ENCODE measurements at regions of chr16 and their contacts with region 1.

Region 1: GRCh38 chr16:57300387-57301125 is 16.1 kb upstream of the PLLP start:
- DNase-seq: peak; percentile 97
- H3K4me3 ChIP-seq: peak overlapping the region; percentile 25 to 47 (median 40)
- H3K27ac ChIP-seq: no peak overlapping the region
- H3K4me1 ChIP-seq: peaks cover 10% of the 10 kb centered on the region
- H3K27me3 ChIP-seq: no peaks in the 10 kb centered on the region
- CTCF ChIP-seq: peak; percentile 97 to 99

Region 2: DNA sequence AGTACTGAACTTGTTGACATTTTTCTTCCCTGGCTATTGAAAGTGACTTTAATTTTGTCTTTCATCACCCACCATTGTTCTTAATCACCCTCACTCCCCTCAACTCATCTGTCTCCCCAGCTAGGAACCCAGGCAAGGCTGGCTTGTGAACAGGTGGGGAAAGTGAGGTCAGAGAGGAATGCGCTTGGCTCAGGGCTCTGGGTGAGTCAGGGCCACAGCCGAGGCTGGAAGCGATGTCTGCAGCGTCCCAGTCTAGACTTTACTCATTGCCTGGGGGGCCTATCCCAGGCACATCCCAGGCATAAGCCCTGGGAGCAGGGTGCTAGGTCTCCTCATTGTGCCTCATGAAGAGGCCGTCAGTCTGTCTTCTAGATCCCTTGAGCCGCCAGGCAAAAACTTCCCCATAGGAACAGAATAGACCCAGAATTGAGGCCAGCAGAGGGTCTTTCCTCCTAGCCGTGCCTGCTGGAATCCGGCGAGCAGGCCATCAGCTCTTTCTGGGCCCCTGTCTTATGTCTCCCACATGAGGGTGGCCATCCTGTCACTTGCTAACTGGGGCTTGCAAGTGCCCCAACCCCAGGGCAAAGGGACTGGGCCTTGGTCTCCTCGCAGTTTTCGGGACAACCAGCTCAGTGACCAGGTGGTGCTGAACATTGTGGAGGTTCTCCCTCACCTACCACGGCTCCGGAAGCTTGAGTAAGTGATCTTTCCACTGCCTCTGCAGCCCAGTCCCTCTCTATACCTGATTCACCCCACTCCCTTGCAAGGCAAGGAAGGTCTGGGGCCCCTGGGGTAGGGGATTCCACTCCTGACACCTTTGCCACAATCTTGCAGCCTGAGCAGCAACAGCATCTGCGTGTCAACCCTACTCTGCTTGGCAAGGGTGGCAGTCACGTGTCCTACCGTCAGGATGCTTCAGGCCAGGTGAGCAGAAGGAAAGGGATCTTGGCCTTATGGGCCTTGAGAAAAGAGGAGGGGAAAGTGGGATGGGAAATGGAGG is 271.1 kb before region 1 on chr16:
- CTCF ChIA-PET with region 1: no interaction called
- dilution Hi-C with region 1: no loop called
- in situ Hi-C with region 1: no loop called
- intact Hi-C with region 1: no loop called
- DNase-seq: peak; percentile 60
- H3K4me3 ChIP-seq: no peak overlapping the region
- H3K27ac ChIP-seq: no peak overlapping the region
- H3K4me1 ChIP-seq: peaks cover 18% of the 10 kb centered on the region
- H3K27me3 ChIP-seq: no peaks in the 10 kb centered on the region
- CTCF ChIP-seq: no peak

Region 3: DNA sequence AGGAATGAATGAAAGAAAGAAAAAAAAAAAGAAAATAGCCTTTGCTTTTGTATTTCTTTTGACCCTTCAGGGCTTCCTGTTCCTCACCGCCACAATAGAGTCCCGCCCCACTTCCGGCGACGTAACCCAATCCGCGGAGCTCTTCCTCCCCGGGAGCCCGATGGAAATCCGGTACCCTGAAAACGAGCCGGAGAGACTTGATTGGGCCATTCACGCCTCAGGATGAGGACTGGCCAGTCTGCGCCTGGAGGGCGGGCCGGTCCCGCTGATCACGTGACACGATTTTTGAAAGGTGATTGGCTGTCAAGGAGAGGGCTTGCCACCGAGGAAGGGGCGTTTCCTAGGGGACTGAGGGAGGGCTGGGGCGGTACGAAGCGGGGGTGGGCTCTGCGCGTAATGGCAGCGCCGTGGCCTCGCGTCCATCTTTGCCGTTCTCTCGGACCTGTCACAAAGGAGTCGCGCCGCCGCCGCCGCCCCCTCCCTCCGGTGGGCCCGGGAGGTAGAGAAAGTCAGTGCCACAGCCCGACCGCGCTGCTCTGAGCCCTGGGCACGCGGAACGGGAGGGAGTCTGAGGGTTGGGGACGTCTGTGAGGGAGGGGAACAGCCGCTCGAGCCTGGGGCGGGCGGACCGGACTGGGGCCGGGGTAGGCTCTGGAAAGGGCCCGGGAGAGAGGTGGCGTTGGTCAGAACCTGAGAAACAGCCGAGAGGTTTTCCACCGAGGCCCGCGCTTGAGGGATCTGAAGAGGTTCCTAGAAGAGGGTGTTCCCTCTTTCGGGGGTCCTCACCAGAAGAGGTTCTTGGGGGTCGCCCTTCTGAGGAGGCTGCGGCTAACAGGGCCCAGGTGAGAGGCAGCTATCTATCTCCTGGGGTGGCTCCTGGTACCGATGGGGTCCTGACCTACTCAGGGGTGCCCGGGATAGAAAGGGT is 114.3 kb before region 1 on chr16 and contains the starts of genes PSME3IP1 and RSPRY1:
- CTCF ChIA-PET with region 1: no interaction called
- dilution Hi-C with region 1: no loop called
- in situ Hi-C with region 1: no loop called
- intact Hi-C with region 1: loop called (anchors 1 kb)
- DNase-seq: peak; percentile 100
- H3K4me3 ChIP-seq: peak within 1 kb of the TSS; percentile 96 to 99 (median 99)
- H3K27ac ChIP-seq: peak within 1 kb of the TSS; percentile 93
- H3K4me1 ChIP-seq: peaks cover 24% of the 10 kb centered on the region
- H3K27me3 ChIP-seq: no peaks in the 10 kb centered on the region
- CTCF ChIP-seq: no peak
- total RNA-seq, gene PSME3IP1: 43.2 to 90.0 TPM
- total RNA-seq, gene RSPRY1: 46.9 to 47.2 TPM

Region 4: DNA sequence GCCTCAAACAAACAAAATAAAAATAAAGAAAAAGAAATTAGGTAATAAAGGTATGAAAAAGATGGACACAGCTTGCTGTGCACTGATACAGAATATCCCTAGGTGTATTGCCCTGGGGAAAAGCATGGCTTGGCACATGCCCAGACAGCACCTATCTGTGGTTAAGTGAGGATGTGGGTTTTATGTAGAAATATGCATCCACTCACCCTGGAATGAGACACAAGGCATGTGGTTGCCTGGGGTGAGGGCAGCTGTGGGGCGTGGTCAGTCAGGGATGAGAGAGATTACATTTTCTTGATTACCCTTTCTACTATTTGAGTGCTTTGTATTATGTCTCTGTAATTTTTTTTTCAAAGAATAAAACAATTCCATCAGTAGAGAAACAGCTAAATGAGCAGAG is 23.0 kb before region 1 on chr16:
- CTCF ChIA-PET with region 1: no interaction called
- dilution Hi-C with region 1: no loop called
- in situ Hi-C with region 1: no loop called
- intact Hi-C with region 1: loop called (anchors 1 kb)
- DNase-seq: peak; percentile 96
- H3K4me3 ChIP-seq: no peak overlapping the region
- H3K27ac ChIP-seq: peak overlapping the region; percentile 80
- H3K4me1 ChIP-seq: peaks cover 36% of the 10 kb centered on the region
- H3K27me3 ChIP-seq: no peaks in the 10 kb centered on the region
- CTCF ChIP-seq: no peak

Region 5: DNA sequence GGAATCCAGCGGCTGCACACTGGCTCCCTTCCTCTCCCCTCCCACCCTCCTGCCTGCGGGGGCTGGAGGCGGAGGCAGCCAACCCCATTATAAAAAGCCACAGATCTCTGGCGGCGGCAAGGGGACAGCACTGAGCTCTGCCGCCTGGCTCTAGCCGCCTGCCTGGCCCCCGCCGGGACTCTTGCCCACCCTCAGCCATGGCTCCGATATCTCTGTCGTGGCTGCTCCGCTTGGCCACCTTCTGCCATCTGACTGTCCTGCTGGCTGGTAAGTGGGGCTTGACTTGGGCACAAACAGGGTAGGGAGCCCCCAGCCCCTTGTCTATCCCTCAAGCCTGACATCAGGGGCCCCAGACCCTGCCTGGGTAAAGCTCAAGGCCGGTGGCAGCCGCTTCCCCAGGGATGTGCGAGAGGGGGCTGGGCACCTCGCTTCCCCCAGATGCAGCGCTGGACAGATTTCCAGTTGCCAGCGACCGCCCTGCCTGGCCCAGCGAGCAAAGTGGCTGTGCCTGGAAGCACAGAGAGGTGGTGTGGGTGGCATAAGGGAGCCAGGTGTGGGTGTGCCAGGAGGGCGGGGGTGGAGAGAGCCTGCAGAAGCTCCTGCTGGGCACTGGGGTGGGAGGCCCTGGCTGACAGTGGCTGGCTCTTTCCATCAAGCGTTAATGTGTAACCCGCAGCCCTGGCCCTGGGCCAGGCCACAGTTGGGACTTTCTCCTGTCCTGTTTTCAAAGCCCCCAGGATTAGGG is 72.0 kb after region 1 on chr16 and contains the start of gene CX3CL1:
- CTCF ChIA-PET with region 1: no interaction called
- dilution Hi-C with region 1: no loop called
- in situ Hi-C with region 1: no loop called
- intact Hi-C with region 1: loop called (anchors 2 kb)
- DNase-seq: peak; percentile 62
- H3K4me3 ChIP-seq: peak within 1 kb of the TSS; percentile 1 to 44 (median 42)
- H3K27ac ChIP-seq: peak within 1 kb of the TSS; percentile 11
- H3K4me1 ChIP-seq: peaks cover 47% of the 10 kb centered on the region
- H3K27me3 ChIP-seq: no peaks in the 10 kb centered on the region
- CTCF ChIP-seq: peak in 1 of 2 donors; percentile 20
- total RNA-seq, gene CX3CL1: 1.2 to 11.2 TPM

Region 6: GRCh38 chr16:57447186-57447962 is 146.8 kb after region 1 on chr16 and contains the starts of genes CIAPIN1 and COQ9:
- CTCF ChIA-PET with region 1: no interaction called
- dilution Hi-C with region 1: no loop called
- in situ Hi-C with region 1: no loop called
- intact Hi-C with region 1: loop called (anchors 1 kb)
- DNase-seq: peak; percentile 92
- H3K4me3 ChIP-seq: peak within 1 kb of the TSS; percentile 86 to 98 (median 94)
- H3K27ac ChIP-seq: peak within 1 kb of the TSS; percentile 86
- H3K4me1 ChIP-seq: peaks cover 11% of the 10 kb centered on the region
- H3K27me3 ChIP-seq: no peaks in the 10 kb centered on the region
- CTCF ChIP-seq: no peak
- total RNA-seq, gene CIAPIN1: 60.8 to 69.9 TPM
- total RNA-seq, gene COQ9: 41.2 to 42.5 TPM

Region 7: DNA sequence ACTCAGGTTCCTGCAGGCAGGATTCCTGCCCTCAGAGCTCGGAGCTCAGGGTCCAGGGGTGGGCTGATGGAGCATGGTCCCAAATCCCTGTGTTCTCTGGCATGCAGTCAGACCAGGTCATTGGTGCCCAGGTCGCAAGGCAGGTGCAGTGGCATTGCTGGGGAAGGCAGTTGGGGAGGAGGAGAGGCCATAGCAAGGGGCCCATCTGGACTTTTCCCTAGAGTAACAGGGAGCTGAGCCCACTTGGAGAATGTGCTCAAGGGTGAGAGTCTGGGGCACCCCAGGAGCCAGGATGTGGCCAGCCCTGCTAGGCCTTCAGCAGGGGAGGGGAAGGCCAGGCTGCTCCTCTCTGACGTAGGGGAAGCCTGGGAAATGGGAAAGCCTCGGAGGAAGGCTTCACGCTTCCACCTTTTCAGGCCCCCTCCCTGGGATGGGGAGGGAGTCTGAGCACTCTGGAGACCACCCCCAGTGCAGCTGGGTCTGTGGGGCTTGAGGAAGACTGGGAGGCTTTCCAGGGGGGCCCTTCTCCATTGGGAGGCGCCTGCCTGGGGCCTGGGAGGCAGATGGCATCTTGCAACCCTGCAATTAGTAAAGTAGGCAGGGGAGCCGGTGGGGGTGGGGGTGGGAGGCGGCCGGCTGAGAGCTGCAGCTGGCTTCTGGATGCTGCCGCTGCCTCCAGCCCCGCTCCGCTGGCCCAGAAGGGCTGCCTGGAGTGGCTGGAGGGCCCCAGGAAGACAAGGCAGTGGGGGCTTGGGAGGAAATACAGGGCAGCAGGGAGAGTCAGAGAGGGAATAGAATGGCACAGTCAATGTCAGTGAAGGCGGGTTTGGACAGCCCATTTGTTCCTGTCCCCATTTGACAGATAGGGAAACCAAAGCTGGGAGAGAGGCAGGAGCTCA is 206.8 kb after region 1 on chr16:
- CTCF ChIA-PET with region 1: no interaction called
- dilution Hi-C with region 1: loop called (anchors 5 kb)
- in situ Hi-C with region 1: loop called in 1 of 2 experiments (anchors 10 kb)
- intact Hi-C with region 1: no loop called
- DNase-seq: no peak
- H3K4me3 ChIP-seq: no peak overlapping the region
- H3K27ac ChIP-seq: no peak overlapping the region
- H3K4me1 ChIP-seq: no peaks in the 10 kb centered on the region
- H3K27me3 ChIP-seq: no peaks in the 10 kb centered on the region
- CTCF ChIP-seq: no peak